AG04449 (cell line): ENCODE measurements at regions of chr10 and their contacts with region 1.

Region 1: GRCh38 chr10:77004917-77005564 is 632.6 kb downstream of the KCNMA1 start:
- DNase-seq: peak; percentile 9
- H3K4me3 ChIP-seq: no peak overlapping the region
- CTCF ChIP-seq: peak; percentile 67

Region 2: GRCh38 chr10:76902949-76903348 is 102.1 kb before region 1 on chr10:
- CTCF ChIA-PET with region 1: no interaction called
- POLR2A ChIA-PET with region 1: no interaction called
- DNase-seq: no peak
- H3K4me3 ChIP-seq: no peak overlapping the region
- CTCF ChIP-seq: no peak

Region 3: DNA sequence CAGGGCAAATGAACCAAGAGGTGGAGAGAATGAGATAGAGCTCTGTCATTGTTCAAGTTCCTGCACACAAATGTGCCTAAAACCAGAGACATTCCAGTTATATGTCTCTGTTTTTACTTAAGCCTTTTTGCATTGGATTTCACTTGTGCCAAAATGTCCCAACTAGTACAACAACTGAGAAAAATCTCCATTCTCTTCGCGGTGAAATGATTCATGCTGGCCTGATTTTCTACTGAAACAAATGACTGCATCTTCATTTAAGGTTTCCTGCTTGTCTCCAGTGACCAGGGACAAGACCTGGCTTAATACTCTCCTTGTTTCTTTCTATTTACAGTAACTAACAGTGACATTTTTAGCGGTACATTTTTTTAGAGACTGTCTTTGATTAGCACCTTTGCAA is 82.4 kb before region 1 on chr10:
- CTCF ChIA-PET with region 1: no interaction called
- POLR2A ChIA-PET with region 1: no interaction called
- DNase-seq: no peak
- H3K4me3 ChIP-seq: no peak overlapping the region
- CTCF ChIP-seq: no peak

Region 4: GRCh38 chr10:76991621-76992020 is 13.4 kb before region 1 on chr10:
- CTCF ChIA-PET with region 1: interaction called, 45 read pairs
- POLR2A ChIA-PET with region 1: no interaction called
- DNase-seq: no peak
- H3K4me3 ChIP-seq: no peak overlapping the region
- CTCF ChIP-seq: no peak

Region 5: DNA sequence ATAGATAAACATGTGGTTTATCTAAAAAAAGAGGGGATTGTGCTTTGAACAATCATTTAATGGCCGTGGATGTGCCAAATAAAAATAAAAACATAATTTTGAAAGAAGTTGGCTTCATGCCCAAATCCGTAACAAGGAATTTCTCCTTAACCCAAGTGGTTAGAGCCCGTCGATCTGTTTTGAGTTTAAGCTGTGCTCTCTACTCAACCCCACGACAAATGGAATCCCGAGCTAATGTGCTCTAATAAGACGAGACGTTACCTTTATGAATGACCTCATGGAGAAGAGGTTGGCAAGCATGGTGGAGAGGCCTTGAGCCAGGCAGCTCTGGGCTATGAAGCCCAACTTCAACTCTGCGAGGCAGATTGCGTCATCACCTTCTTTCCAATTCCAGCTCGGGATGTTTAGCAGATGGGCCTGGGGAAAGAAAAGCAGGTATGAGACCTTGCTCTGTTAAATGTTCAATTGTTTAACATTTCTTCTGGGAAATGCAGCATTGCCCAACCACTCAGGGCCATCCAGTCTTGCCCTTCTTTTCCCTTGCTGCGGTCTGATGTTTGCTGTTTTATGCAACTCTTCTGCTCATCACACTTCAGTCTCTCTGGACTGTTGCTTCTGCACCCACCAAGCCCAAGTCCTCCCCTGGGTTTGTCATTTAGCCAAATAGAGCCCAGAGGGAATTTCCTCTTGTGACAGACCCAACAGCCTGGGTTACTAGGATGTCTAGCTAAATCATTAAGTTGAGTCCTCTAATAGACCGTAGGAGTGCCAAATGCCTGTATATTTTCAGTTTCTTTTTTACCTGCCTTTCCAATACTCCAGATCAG is 68.0 kb after region 1 on chr10:
- CTCF ChIA-PET with region 1: no interaction called
- POLR2A ChIA-PET with region 1: no interaction called
- DNase-seq: no peak
- H3K4me3 ChIP-seq: no peak overlapping the region
- CTCF ChIP-seq: no peak